Right lobe of liver (tissue), 6 donors: ENCODE measurements at regions of chr16 and their contacts with region 1.

Region 1: GRCh38 chr16:31696968-31697743 is 169.5 kb downstream of the AHSP start:
- DNase-seq: no peak
- ATAC-seq: peak; percentile 64 to 71 (median 69)
- H3K4me3 ChIP-seq: no peak overlapping the region
- H3K27ac ChIP-seq: no peak overlapping the region
- H3K4me1 ChIP-seq: no peaks in the 10 kb centered on the region
- H3K27me3 ChIP-seq: no peaks in the 10 kb centered on the region
- CTCF ChIP-seq: peak; percentile 58 to 93 (median 71)
- POLR2A ChIP-seq: no peak

Region 2: GRCh38 chr16:31461921-31462804 is 235.0 kb before region 1 on chr16:
- intact Hi-C with region 1: no loop called
- DNase-seq: peak; percentile 92 to 98 (median 98)
- ATAC-seq: peak; percentile 48 to 68 (median 58)
- H3K4me3 ChIP-seq: peak overlapping the region; percentile 16 to 71 (median 62)
- H3K27ac ChIP-seq: peak overlapping the region in 2 of 3 donors; percentile 76 to 90
- H3K4me1 ChIP-seq: peaks cover 0 to 35% (median 16%) of the 10 kb centered on the region in 4 donors
- H3K27me3 ChIP-seq: no peaks in the 10 kb centered on the region
- CTCF ChIP-seq: no peak
- POLR2A ChIP-seq: no peak

Region 3: GRCh38 chr16:31472709-31473203 is 224.4 kb before region 1 on chr16:
- intact Hi-C with region 1: loop called in 1 of 2 experiments (anchors 10 kb)
- DNase-seq: peak; percentile 85 to 91 (median 87)
- ATAC-seq: peak; percentile 67 to 83 (median 75)
- H3K4me3 ChIP-seq: peak overlapping the region; percentile 40 to 42 (median 40)
- H3K27ac ChIP-seq: peak overlapping the region; percentile 20 to 76 (median 35)
- H3K4me1 ChIP-seq: peaks cover 0 to 23% (median 0%) of the 10 kb centered on the region in 4 donors
- H3K27me3 ChIP-seq: no peaks in the 10 kb centered on the region
- CTCF ChIP-seq: peak; percentile 60 to 81 (median 78)
- POLR2A ChIP-seq: no peak